ENCODE measurements at regions of chr3 and their contacts with region 1.

Region 1: GRCh38 chr3:153161138-153161713 is 800 bp upstream of the RAP2B start:
- DNase-seq: peak; percentile 100
- H3K4me3 Mint-ChIP-seq: peak overlapping the region; percentile 77
- H3K27ac Mint-ChIP-seq: peak overlapping the region; percentile 92
- H3K4me1 Mint-ChIP-seq: peaks cover 23% of the 10 kb centered on the region
- H3K27me3 Mint-ChIP-seq: no peaks in the 10 kb centered on the region
- CTCF ChIP-seq: no peak

Region 2: DNA sequence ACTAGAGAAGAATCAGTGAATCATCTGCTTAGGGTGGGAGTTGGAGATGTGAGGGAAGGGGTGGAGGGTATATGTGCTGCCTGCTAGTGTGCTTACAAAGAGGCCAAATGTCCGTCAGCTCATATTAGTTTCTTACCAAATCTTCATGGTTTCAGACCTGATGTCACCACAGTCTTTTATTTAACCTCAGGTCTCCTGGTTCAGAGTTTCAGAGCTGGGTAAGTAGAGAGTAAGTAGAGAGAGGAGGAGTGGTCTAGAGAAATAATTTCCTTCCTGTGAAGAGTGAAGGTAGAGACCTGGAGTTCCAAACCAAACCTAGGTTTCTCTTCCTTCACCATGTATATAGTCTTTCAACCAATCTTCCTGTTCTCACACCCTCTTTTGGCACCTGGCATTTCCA is 343.8 kb before region 1 on chr3:
- CTCF ChIA-PET with region 1: no interaction called
- POLR2A ChIA-PET with region 1: no interaction called
- intact Hi-C with region 1: no loop called
- DNase-seq: no peak
- H3K4me3 Mint-ChIP-seq: no peak overlapping the region
- H3K27ac Mint-ChIP-seq: no peak overlapping the region
- H3K4me1 Mint-ChIP-seq: no peaks in the 10 kb centered on the region
- H3K27me3 Mint-ChIP-seq: no peaks in the 10 kb centered on the region
- CTCF ChIP-seq: no peak

Region 3: DNA sequence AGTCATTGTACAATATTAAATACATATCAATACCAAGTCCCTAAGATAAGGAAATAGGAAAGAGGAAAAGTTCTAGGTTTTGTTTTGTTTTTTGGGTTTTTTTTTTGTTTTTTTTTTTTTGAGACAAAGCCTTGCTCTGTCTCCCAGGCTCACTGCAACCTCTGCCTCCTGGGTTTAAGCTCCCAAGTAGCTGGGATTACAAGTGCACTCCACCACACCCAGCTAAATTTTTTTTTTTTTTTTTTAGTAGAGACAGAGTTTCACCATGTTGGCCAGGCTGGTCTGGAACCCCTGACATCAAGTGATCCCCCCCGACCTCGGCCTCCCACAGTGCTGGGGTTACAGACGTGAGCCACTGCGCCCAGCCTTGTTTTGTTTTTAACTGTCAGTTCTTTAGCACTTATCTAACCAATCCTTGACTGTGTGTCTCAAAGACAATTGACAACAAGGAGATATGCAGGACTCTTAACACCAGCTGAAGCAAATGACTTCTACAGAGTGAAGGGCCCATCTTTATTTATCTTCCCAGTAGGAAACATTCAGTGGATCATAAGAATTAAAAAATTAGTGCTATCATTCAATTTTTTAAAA is 99.2 kb before region 1 on chr3:
- CTCF ChIA-PET with region 1: interaction called, 4 read pairs
- POLR2A ChIA-PET with region 1: interaction called, 254 read pairs
- intact Hi-C with region 1: loop called (anchors 1 kb)
- DNase-seq: no peak
- H3K4me3 Mint-ChIP-seq: no peak overlapping the region
- H3K27ac Mint-ChIP-seq: no peak overlapping the region
- H3K4me1 Mint-ChIP-seq: peaks cover 9% of the 10 kb centered on the region
- H3K27me3 Mint-ChIP-seq: no peaks in the 10 kb centered on the region
- CTCF ChIP-seq: no peak

Region 4: GRCh38 chr3:153150991-153151390 is 10.2 kb before region 1 on chr3:
- CTCF ChIA-PET with region 1: interaction called, 6 read pairs
- POLR2A ChIA-PET with region 1: interaction called, 456 read pairs
- intact Hi-C with region 1: no loop called
- DNase-seq: no peak
- H3K4me3 Mint-ChIP-seq: no peak overlapping the region
- H3K27ac Mint-ChIP-seq: no peak overlapping the region
- H3K4me1 Mint-ChIP-seq: peaks cover 4% of the 10 kb centered on the region
- H3K27me3 Mint-ChIP-seq: no peaks in the 10 kb centered on the region
- CTCF ChIP-seq: no peak

Region 5: DNA sequence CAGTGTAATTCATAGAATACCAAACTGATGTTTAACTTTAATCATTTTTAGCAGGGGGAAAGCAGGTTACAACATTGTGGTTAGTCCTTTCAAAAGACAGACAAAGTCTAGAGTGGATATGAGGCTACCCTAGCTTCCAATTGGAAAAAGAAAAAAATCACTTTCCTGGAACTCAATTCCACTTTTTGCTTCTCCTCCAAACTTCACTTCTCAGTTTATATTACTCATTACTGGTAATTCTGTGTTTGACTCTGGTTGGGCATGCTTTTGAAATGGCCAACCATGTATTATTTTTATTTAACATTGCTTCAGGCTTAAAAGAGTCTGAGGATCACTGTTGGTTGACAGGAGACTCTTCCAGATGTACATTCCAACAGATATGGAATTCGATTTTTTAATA is 85.6 kb after region 1 on chr3:
- CTCF ChIA-PET with region 1: no interaction called
- POLR2A ChIA-PET with region 1: interaction called, 11 read pairs
- intact Hi-C with region 1: no loop called
- DNase-seq: peak; percentile 13
- H3K4me3 Mint-ChIP-seq: no peak overlapping the region
- H3K27ac Mint-ChIP-seq: no peak overlapping the region
- H3K4me1 Mint-ChIP-seq: peaks cover 18% of the 10 kb centered on the region
- H3K27me3 Mint-ChIP-seq: no peaks in the 10 kb centered on the region
- CTCF ChIP-seq: no peak

Region 6: GRCh38 chr3:153291056-153291685 is 129.9 kb after region 1 on chr3:
- CTCF ChIA-PET with region 1: interaction called, 35 read pairs
- POLR2A ChIA-PET with region 1: interaction called, 160 read pairs
- intact Hi-C with region 1: loop called (anchors 1 kb)
- DNase-seq: peak; percentile 65
- H3K4me3 Mint-ChIP-seq: no peak overlapping the region
- H3K27ac Mint-ChIP-seq: no peak overlapping the region
- H3K4me1 Mint-ChIP-seq: peaks cover 40% of the 10 kb centered on the region
- H3K27me3 Mint-ChIP-seq: no peaks in the 10 kb centered on the region
- CTCF ChIP-seq: peak; percentile 52

Region 7: DNA sequence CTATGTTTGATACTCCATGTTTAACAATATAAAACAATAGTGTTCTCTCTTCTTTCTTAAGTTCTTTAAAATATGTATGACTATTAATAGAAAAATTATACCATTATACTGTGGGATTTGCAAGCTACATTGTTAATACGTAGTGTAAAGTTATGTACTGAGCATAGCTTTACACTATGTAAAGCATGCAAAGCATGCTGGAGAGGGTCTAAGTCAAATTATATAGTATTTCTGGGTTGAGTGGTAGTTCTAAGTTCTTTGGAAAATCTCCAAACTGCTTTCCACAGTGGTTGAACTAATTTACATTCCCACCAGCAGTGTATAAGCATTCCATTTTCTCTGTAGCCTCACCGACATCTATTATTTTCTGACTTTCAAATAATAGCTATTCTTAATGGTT is 253.8 kb after region 1 on chr3:
- CTCF ChIA-PET with region 1: no interaction called
- POLR2A ChIA-PET with region 1: no interaction called
- intact Hi-C with region 1: no loop called
- DNase-seq: no peak
- H3K4me3 Mint-ChIP-seq: no peak overlapping the region
- H3K27ac Mint-ChIP-seq: no peak overlapping the region
- H3K4me1 Mint-ChIP-seq: no peaks in the 10 kb centered on the region
- H3K27me3 Mint-ChIP-seq: no peaks in the 10 kb centered on the region
- CTCF ChIP-seq: no peak

Region 8: DNA sequence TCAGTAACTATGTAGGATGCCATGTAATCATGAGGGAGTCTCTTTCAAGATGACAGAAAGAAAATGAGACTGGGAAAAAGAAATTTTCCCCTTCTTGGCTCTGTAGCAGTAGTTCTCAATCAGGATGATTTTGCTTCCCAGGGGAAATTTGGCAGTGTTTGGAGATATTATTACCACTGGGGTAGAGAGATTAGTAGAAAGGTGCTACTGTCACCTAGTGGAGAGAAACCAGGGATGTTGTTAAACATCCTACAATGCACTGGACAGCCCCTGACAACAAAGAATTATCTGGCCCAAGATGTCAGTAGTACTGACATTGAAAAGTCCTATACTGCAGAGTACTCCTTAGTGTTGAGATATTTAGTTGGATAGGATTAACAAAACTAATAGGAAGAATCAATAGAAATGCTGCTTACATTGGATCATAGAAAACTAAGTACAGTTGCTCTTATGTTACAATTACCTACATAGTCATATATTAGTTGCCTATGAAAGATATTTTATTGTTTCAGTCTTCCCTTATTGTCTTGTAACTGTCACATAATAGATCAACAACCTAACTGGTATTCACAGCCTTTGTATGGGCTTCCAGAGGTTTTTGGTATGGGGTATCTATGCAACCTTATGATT is 434.1 kb after region 1 on chr3:
- CTCF ChIA-PET with region 1: interaction called, 5 read pairs
- POLR2A ChIA-PET with region 1: interaction called, 8 read pairs
- intact Hi-C with region 1: loop called (anchors 1 kb)
- DNase-seq: peak; percentile 63
- H3K4me3 Mint-ChIP-seq: no peak overlapping the region
- H3K27ac Mint-ChIP-seq: no peak overlapping the region
- H3K4me1 Mint-ChIP-seq: peaks cover 8% of the 10 kb centered on the region
- H3K27me3 Mint-ChIP-seq: no peaks in the 10 kb centered on the region
- CTCF ChIP-seq: peak; percentile 78

Region 9: DNA sequence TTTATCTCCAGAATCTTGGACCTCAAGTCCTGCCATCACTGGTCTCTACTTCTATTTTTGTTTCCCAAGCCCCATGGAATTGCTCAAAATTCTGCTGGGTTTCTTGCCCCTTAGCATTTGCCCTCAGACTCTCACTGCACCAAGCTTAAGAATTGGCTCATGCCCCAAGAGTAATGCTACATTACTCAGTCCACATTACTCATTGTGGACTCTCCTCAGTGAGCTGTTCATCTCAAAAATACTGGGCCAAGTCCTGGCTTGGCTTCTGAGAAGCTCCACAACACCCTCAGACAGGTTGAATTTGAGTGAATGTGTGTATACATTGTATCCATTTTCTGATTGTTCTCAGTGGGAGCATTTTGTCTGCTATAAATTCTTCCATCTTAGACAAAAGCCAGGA is 595.6 kb after region 1 on chr3:
- CTCF ChIA-PET with region 1: no interaction called
- POLR2A ChIA-PET with region 1: no interaction called
- intact Hi-C with region 1: no loop called
- DNase-seq: peak; percentile 24
- H3K4me3 Mint-ChIP-seq: no peak overlapping the region
- H3K27ac Mint-ChIP-seq: no peak overlapping the region
- H3K4me1 Mint-ChIP-seq: peaks cover 10% of the 10 kb centered on the region
- H3K27me3 Mint-ChIP-seq: no peaks in the 10 kb centered on the region
- CTCF ChIP-seq: no peak

Region 10: GRCh38 chr3:153970741-153971347 is 809.6 kb after region 1 on chr3:
- CTCF ChIA-PET with region 1: interaction called, 3 read pairs
- POLR2A ChIA-PET with region 1: interaction called, 4 read pairs
- intact Hi-C with region 1: loop called (anchors 5 kb)
- DNase-seq: peak; percentile 30
- H3K4me3 Mint-ChIP-seq: no peak overlapping the region
- H3K27ac Mint-ChIP-seq: no peak overlapping the region
- H3K4me1 Mint-ChIP-seq: no peaks in the 10 kb centered on the region
- H3K27me3 Mint-ChIP-seq: no peaks in the 10 kb centered on the region
- CTCF ChIP-seq: peak; percentile 33

Measured in MCF 10A (cell line).